CD4-positive, alpha-beta T cell (primary cell): ENCODE measurements at regions of chr7 and their contacts with region 1.

Region 1: GRCh38 chr7:22726345-22727185 is 435 bp upstream of the IL6 start:
- DNase-seq: peak; percentile 14 to 77 (median 29)
- ATAC-seq: peak; percentile 87
- H3K4me3 ChIP-seq: peak overlapping the region; percentile 7
- H3K4me3 Mint-ChIP-seq: peak overlapping the region; percentile 67
- H3K27ac ChIP-seq: no peak overlapping the region
- H3K27ac Mint-ChIP-seq: no peak overlapping the region
- H3K4me1 ChIP-seq: peaks cover 22% of the 10 kb centered on the region
- H3K4me1 Mint-ChIP-seq: peaks cover 18% of the 10 kb centered on the region
- H3K27me3 ChIP-seq: peaks cover 10 to 11% of the 10 kb centered on the region in 2 experiments
- H3K27me3 Mint-ChIP-seq: peaks cover 42% of the 10 kb centered on the region
- CTCF ChIP-seq: peak; percentile 68

Region 2: DNA sequence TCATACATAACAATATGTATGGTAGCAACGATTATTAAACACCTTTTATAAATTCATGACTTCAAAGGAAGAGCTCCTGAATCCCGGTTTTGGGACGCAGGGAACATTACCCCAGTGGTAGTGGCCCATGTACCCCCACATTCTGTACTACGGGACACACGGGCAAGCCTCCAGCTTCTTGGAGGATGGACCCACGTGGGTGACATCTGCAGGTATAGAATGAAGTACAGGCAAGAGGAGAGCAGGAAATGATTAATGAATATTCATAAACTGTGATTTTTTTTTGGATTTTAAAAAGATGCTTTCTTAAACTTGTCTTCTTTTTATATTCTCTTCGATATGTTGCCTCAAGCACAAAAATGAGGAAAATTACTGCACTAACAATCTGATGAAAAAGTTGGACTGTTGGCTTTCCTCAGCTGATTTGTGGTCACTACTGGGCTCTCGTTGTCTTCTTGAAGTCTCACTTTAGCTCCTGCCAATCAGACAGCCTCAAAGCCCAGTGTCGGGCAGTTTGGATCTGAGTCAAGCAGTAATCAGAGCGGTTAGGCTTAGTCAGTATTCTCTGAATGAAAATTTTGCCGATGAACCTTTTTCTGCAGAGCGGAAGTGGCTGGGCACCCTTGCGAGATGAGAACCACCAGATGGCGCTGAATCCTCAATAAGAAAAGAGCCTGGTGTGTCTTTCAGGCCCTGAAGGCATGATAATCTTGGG is 623.2 kb before region 1 on chr7:
- CTCF ChIA-PET with region 1: no interaction called
- POLR2A ChIA-PET with region 1: no interaction called
- intact Hi-C with region 1: loop called in 1 of 2 experiments (anchors 10 kb)
- DNase-seq: peak; percentile 9 to 74 (median 36)
- ATAC-seq: no peak
- H3K4me3 ChIP-seq: no peak overlapping the region
- H3K4me3 Mint-ChIP-seq: no peak overlapping the region
- H3K27ac ChIP-seq: no peak overlapping the region
- H3K27ac Mint-ChIP-seq: no peak overlapping the region
- H3K4me1 ChIP-seq: peaks cover 3% of the 10 kb centered on the region
- H3K4me1 Mint-ChIP-seq: no peaks in the 10 kb centered on the region
- H3K27me3 ChIP-seq: peaks cover 3% of the 10 kb centered on the region in 2 experiments
- H3K27me3 Mint-ChIP-seq: peaks cover 20% of the 10 kb centered on the region
- CTCF ChIP-seq: peak; percentile 73

Region 3: GRCh38 chr7:22559829-22560489 is 166.6 kb before region 1 on chr7:
- CTCF ChIA-PET with region 1: interaction called, 9 read pairs
- POLR2A ChIA-PET with region 1: no interaction called
- intact Hi-C with region 1: loop called (anchors 1 kb)
- DNase-seq: peak; percentile 40 to 83 (median 56)
- ATAC-seq: peak; percentile 96
- H3K4me3 ChIP-seq: no peak overlapping the region
- H3K4me3 Mint-ChIP-seq: no peak overlapping the region
- H3K27ac ChIP-seq: no peak overlapping the region
- H3K27ac Mint-ChIP-seq: no peak overlapping the region
- H3K4me1 ChIP-seq: peaks cover 21% of the 10 kb centered on the region
- H3K4me1 Mint-ChIP-seq: peaks cover 28% of the 10 kb centered on the region
- H3K27me3 ChIP-seq: peaks cover 3 to 5% of the 10 kb centered on the region in 2 experiments
- H3K27me3 Mint-ChIP-seq: peaks cover 21% of the 10 kb centered on the region
- CTCF ChIP-seq: peak; percentile 73

Region 4: DNA sequence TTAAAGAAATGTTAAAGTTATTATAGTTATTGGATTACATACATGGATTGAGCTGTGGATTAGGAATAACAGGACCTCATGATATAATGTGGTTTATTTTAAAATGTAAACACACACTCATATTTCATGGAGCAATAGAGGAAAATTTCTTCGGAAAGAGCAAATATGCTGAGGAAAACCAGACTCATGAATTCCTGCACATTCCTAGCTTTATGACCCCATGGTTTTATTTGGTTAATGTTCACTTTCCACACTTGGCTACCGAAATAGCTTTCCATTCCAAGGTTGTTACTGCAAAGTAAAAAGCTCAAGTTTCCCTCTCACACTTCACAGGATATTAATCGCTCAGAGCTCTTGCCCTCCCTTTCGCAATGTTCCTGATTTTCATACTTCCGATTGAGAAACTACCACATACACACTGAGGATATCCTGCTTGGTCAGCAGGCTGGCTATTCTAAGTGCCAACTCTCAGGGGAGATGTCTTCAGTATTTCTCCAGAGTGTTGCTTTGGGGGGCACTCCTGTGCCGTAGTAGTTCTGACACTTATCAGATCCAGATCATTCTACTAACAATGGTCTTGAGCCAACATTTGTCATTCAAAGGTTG is 149.1 kb before region 1 on chr7:
- CTCF ChIA-PET with region 1: no interaction called
- POLR2A ChIA-PET with region 1: no interaction called
- intact Hi-C with region 1: loop called in 1 of 2 experiments (anchors 5 kb)
- DNase-seq: peak in 2 of 14 experiments; percentile 37 to 40
- ATAC-seq: no peak
- H3K4me3 ChIP-seq: no peak overlapping the region
- H3K4me3 Mint-ChIP-seq: no peak overlapping the region
- H3K27ac ChIP-seq: no peak overlapping the region
- H3K27ac Mint-ChIP-seq: no peak overlapping the region
- H3K4me1 ChIP-seq: no peaks in the 10 kb centered on the region
- H3K4me1 Mint-ChIP-seq: no peaks in the 10 kb centered on the region
- H3K27me3 ChIP-seq: peaks cover 0 to 3% of the 10 kb centered on the region in 2 experiments
- H3K27me3 Mint-ChIP-seq: peaks cover 27% of the 10 kb centered on the region
- CTCF ChIP-seq: no peak

Region 5: GRCh38 chr7:22660732-22661131 is 65.8 kb before region 1 on chr7:
- CTCF ChIA-PET with region 1: no interaction called
- POLR2A ChIA-PET with region 1: no interaction called
- intact Hi-C with region 1: loop called (anchors 1 to 2 kb)
- DNase-seq: no peak
- ATAC-seq: no peak
- H3K4me3 ChIP-seq: no peak overlapping the region
- H3K4me3 Mint-ChIP-seq: no peak overlapping the region
- H3K27ac ChIP-seq: no peak overlapping the region
- H3K27ac Mint-ChIP-seq: no peak overlapping the region
- H3K4me1 ChIP-seq: no peaks in the 10 kb centered on the region
- H3K4me1 Mint-ChIP-seq: no peaks in the 10 kb centered on the region
- H3K27me3 ChIP-seq: no peaks in the 10 kb centered on the region
- H3K27me3 Mint-ChIP-seq: no peaks in the 10 kb centered on the region
- CTCF ChIP-seq: no peak